Activated B cell treated with CpG ODN at 0.5 μM for 24 hours (primary cell): ENCODE measurements at regions of chr11 and their contacts with region 1.

Region 1: DNA sequence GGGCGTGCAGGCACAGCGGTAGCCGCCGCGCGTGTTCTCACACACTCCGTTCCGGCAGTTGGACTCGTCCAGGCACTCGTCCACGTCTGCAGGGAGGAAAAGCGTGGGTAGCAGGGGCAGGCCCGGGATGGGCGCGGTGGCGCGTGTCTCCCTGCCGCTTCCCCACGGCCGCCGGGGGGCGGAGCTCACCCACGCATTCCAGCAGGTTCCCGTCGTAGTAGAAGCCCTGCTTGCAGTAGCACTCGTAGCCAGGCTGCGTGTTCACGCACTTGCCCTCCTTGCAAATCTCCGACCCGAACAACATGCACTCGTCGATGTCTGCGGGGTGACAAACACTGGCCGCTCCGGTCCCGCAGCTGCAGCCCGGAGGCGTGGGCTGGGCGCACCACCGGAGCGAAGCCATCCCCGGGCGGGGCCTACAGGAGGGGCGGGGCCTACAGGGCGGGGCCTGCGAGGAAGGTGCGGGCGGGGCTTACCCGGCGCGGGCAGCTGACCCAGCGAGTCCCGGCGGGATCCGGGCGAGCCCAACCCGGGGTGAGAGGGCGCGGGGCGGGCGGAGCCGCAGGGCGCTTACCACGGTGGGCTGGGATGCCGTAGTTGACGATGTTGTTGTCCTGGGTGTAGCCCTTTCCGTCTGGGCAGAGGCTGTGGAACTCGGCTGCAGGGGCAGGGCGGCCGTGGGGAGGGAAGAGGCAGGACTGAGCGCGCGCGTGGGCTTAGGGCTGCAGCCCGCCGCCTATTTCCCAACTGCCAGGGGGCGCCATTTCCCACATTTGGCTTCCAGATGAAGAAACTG is 15.6 kb downstream of the SCYL1 start:
- DNase-seq: peak; percentile 88
- ATAC-seq: peak; percentile 88
- H3K4me3 Mint-ChIP-seq: peak overlapping the region; percentile 88
- H3K27ac Mint-ChIP-seq: peak overlapping the region; percentile 86
- H3K4me1 Mint-ChIP-seq: peaks cover 22% of the 10 kb centered on the region
- H3K27me3 Mint-ChIP-seq: no peaks in the 10 kb centered on the region
- CTCF ChIP-seq: no peak

Region 2: GRCh38 chr11:65459552-65459951 is 80.9 kb before region 1 on chr11:
- CTCF ChIA-PET with region 1: no interaction called
- POLR2A ChIA-PET with region 1: no interaction called
- intact Hi-C with region 1: no loop called
- DNase-seq: no peak
- ATAC-seq: no peak
- H3K4me3 Mint-ChIP-seq: no peak overlapping the region
- H3K27ac Mint-ChIP-seq: no peak overlapping the region
- H3K4me1 Mint-ChIP-seq: peaks cover 27% of the 10 kb centered on the region
- H3K27me3 Mint-ChIP-seq: no peaks in the 10 kb centered on the region
- CTCF ChIP-seq: no peak

Region 3: DNA sequence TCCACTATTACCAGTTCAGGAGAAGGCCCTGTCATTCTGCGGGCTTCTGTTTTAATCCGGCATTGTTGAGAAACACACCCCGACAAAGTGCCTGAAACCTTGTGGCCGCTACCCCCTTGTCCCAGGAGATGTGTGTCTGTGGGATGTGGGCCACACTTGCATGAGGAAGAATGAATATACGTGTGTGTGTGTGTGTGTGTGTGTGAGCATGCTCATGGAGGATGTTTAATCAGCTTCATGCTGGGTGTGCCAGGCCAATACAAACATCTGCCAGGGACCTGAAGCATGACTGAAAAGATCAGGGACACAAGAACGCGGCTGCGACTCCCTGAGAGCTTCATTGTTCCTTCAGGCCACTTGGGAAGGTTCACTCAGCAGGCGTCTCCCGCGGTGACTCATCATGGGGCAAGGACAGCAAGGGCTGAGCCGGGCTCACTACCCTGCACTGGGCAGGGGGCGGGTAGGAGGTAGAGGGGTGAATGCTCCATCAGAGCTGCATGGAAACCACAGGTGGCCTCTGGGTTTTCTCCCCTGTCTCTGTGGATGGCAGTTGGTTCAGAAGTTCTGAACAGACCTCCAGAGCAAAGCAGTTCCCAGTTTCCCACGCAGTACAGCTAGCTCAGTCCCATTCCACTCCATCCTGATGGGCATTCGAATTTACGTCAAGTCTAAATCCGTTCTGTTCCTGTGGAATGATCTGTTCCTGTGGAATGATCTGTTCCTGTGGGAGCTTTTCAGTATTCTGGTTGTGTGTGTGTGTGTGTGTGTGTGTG is 48.7 kb before region 1 on chr11:
- CTCF ChIA-PET with region 1: no interaction called
- POLR2A ChIA-PET with region 1: no interaction called
- intact Hi-C with region 1: no loop called
- DNase-seq: no peak
- ATAC-seq: peak; percentile 26
- H3K4me3 Mint-ChIP-seq: peak overlapping the region; percentile 52
- H3K27ac Mint-ChIP-seq: peak overlapping the region; percentile 90
- H3K4me1 Mint-ChIP-seq: peaks cover 82% of the 10 kb centered on the region
- H3K27me3 Mint-ChIP-seq: no peaks in the 10 kb centered on the region
- CTCF ChIP-seq: no peak

Region 4: DNA sequence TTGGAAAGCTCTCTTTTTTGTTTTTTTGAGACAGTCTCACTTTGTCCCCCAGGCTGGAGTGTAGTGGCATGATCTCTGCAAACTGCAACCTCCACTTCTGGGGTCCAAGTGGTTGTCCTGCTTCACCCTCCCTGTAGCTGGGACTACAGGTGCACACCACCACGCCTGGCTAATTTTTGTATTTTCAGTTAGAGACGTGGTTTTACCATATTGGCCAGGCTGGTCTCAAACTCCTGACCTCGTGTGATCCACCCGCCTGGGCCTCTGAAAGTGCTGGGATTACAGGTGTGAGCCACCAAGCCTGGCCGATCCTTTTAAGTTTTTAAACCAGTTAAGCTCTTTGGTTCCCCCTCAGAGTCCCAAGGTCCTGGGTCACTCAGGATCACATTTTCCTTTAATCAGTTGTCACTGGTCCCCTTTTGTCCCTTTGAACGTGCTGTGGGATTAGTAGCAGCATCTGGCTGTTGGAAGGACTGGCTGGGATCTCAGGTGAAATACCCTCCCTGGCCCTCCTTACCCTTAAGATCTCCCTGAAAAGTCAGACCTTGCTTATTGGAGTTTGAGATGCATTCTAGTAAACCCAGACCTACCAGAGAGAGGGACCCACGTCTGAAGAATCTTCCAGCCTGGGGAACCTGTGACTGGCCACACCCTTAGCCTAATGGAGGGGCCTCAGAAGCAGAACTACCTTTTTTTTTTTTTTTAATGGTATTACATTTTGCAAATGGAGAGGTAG is 33.6 kb before region 1 on chr11:
- CTCF ChIA-PET with region 1: no interaction called
- POLR2A ChIA-PET with region 1: interaction called, 12 read pairs
- intact Hi-C with region 1: no loop called
- DNase-seq: no peak
- ATAC-seq: peak; percentile 49
- H3K4me3 Mint-ChIP-seq: no peak overlapping the region
- H3K27ac Mint-ChIP-seq: peak overlapping the region; percentile 84
- H3K4me1 Mint-ChIP-seq: peaks cover 62% of the 10 kb centered on the region
- H3K27me3 Mint-ChIP-seq: no peaks in the 10 kb centered on the region
- CTCF ChIP-seq: no peak

Region 5: DNA sequence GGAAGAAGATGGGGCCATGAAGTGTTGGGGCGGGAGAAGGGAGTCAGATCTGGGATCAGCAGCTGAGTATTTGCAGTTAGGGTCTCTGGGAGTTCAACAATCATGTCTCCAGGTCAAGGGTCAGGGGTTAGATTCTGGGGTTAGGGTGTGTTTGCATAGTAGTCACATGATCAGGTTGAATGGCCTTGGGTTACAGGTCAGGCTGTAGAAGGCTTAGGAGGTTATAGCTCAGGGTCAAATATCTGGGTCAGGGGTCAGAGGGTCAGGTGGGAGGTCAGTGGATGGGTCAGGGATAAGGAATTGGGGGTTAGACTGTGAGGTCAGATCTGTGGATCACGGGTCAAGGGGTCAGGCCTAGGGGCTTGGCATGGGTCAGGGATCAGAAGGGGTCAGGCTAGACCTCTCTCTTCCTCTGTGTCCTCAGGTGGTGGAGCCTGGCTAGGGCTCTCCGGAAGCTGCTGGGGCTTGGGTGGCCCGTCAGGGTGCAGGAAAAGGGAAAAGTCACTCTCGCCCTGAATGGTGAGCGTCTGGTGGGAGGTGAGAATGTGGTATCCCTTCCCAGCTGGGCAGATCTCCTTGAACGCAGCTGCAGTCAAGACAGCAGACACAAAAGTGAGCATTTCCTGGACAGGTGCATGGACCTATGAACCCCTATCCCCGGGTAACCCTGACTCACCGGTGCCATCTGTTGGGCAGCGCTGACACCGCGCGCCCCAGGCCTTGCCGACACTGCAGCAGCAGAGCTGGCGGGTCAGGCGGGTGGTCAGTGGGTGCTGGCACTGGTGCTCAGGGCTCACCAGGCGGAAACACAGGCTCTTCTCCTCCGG is 11.3 kb after region 1 on chr11:
- CTCF ChIA-PET with region 1: interaction called, 47 read pairs
- POLR2A ChIA-PET with region 1: interaction called, 38 read pairs
- intact Hi-C with region 1: loop called (anchors 1 kb)
- DNase-seq: peak; percentile 69
- ATAC-seq: peak; percentile 83
- H3K4me3 Mint-ChIP-seq: peak overlapping the region; percentile 24
- H3K27ac Mint-ChIP-seq: peak overlapping the region; percentile 59
- H3K4me1 Mint-ChIP-seq: peaks cover 64% of the 10 kb centered on the region
- H3K27me3 Mint-ChIP-seq: no peaks in the 10 kb centered on the region
- CTCF ChIP-seq: no peak

Region 6: GRCh38 chr11:65588199-65589054 is 47.9 kb after region 1 on chr11:
- CTCF ChIA-PET with region 1: interaction called, 52 read pairs
- POLR2A ChIA-PET with region 1: interaction called, 52 read pairs
- intact Hi-C with region 1: loop called (anchors 1 kb)
- DNase-seq: peak; percentile 76
- ATAC-seq: peak; percentile 80
- H3K4me3 Mint-ChIP-seq: peak overlapping the region; percentile 70
- H3K27ac Mint-ChIP-seq: peak overlapping the region; percentile 96
- H3K4me1 Mint-ChIP-seq: peaks cover 44% of the 10 kb centered on the region
- H3K27me3 Mint-ChIP-seq: no peaks in the 10 kb centered on the region
- CTCF ChIP-seq: peak; percentile 38

Region 7: DNA sequence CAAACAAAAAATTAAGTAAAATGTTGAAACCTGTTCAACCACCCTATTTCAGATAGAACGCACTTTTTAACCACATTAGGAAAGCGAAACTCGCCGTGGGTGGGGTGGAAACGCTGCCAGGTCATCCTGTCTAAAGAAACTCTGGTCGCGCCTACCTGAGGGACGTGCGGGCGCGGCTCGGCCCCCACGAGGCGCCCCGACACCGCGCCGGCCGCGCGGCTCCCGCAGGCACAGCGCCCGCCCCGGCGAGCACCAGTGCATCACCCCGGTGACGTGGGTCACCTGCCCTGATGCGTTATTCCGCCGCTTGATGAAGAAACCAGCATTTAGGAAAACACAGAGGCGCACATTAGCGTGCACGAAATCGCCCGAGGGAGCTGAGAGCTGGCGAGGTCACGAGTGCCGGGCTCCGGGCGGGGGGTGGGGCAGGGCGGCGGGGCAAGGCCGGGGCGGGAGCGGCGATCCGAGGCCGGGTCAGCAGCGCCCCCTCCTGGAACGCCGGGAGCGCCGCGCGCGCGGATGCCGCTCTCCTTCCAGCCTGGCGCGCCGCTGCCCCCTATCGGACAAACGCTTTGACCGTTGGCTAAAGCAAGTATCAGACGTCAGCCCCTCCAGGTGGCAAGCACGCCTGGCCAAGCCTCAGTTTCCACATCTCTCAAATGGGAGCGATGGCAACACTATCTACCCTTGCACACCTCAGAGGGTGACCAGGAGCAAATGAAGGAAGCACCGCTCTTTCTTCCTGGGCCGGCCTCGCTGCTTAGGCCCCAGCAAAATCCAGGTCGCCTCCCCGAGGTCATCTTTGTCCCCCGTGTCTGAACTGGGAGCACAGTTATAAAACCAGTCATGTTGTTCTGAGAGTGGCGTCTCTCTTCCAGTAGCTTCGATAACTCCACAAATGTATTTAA is 277.6 kb after region 1 on chr11:
- CTCF ChIA-PET with region 1: no interaction called
- POLR2A ChIA-PET with region 1: no interaction called
- intact Hi-C with region 1: loop called (anchors 1 kb)
- DNase-seq: peak; percentile 95
- ATAC-seq: peak; percentile 95
- H3K4me3 Mint-ChIP-seq: peak overlapping the region; percentile 77
- H3K27ac Mint-ChIP-seq: peak overlapping the region; percentile 63
- H3K4me1 Mint-ChIP-seq: peaks cover 14% of the 10 kb centered on the region
- H3K27me3 Mint-ChIP-seq: no peaks in the 10 kb centered on the region
- CTCF ChIP-seq: peak; percentile 96